CD8-positive, alpha-beta T cell (primary cell): ENCODE measurements at regions of chr2 and their contacts with region 1.

Region 1: GRCh38 chr2:75416420-75417342 is 144.1 kb downstream of the EVA1A start:
- DNase-seq: peak in 5 of 9 experiments; percentile 10 to 69 (median 50)
- ATAC-seq: peak; percentile 95
- H3K4me3 ChIP-seq: peak overlapping the region; percentile 39 to 48
- H3K4me3 Mint-ChIP-seq: peak overlapping the region; percentile 91
- H3K27ac ChIP-seq: peak overlapping the region; percentile 43 to 60
- H3K27ac Mint-ChIP-seq: peak overlapping the region; percentile 95
- H3K4me1 ChIP-seq: peaks cover 17% of the 10 kb centered on the region
- H3K4me1 Mint-ChIP-seq: peaks cover 50% of the 10 kb centered on the region
- H3K27me3 ChIP-seq: no peaks in the 10 kb centered on the region
- H3K27me3 Mint-ChIP-seq: no peaks in the 10 kb centered on the region
- CTCF ChIP-seq: no peak

Region 2: DNA sequence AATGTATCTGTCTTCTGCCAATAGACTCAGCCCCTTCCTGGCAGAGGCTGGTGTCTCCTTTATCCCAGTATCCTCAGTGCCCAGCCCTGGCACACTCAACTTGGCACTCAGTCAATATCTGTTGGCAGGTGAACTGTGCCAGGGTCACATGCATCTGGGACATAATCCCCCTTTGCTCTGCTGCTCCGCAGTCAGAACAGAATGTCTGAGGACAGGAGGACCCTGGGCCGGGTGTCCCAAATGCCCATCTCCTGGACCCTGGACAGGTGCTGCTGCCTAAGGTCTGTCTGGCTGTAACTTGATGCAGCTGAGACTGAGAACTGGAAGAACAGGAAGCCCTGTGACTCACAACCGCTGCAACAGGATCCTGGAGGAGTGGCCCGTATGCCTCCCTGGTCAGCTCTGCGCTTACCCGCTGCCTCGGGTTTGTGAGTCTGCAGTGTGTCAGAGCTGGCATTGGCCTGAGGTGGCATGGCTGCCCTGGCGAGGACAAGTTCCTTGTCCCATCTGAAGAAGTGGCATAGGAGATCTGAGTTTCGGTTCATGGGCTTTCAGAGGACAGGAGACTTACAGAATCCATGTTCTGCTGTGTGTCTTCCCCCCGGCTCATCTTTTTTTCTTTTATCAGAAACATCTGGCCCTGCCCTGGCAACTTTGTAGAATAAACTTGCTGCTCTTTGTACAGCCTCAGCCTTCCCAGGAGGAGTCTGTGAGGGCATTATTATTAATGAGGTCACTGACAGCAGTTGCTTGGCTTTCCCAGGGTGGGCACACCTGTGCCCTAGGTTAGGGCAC is 571.3 kb before region 1 on chr2:
- CTCF ChIA-PET with region 1: no interaction called
- POLR2A ChIA-PET with region 1: no interaction called
- intact Hi-C with region 1: loop called in 1 of 2 experiments (anchors 10 kb)
- DNase-seq: peak in 5 of 9 experiments; percentile 15 to 43 (median 23)
- ATAC-seq: no peak
- H3K4me3 ChIP-seq: no peak overlapping the region
- H3K4me3 Mint-ChIP-seq: peak overlapping the region; percentile 37
- H3K27ac ChIP-seq: no peak overlapping the region
- H3K27ac Mint-ChIP-seq: no peak overlapping the region
- H3K4me1 ChIP-seq: peaks cover 97% of the 10 kb centered on the region
- H3K4me1 Mint-ChIP-seq: peaks cover 90% of the 10 kb centered on the region
- H3K27me3 ChIP-seq: no peaks in the 10 kb centered on the region
- H3K27me3 Mint-ChIP-seq: no peaks in the 10 kb centered on the region
- CTCF ChIP-seq: no peak

Region 3: DNA sequence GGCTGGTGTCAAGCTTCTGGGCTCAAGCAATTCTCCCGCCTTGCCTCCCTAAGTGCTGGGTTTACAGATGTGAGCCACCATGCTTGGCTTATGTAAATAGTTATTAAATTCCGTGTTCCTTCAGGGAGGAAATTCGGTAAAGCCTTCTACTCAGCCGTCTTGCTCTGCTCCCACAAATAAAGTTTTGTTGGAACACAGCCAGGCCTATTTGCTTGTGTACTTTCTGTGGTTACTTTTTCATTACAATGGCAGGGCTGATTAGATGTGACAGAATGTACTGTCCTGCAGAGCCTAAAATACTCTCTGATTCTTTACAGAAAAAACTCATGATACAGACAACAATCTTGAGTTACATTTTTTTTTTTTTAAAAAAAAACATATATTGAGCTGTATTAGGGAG is 148.6 kb before region 1 on chr2:
- CTCF ChIA-PET with region 1: no interaction called
- POLR2A ChIA-PET with region 1: no interaction called
- intact Hi-C with region 1: no loop called
- DNase-seq: no peak
- ATAC-seq: no peak
- H3K4me3 ChIP-seq: no peak overlapping the region
- H3K4me3 Mint-ChIP-seq: no peak overlapping the region
- H3K27ac ChIP-seq: no peak overlapping the region
- H3K27ac Mint-ChIP-seq: no peak overlapping the region
- H3K4me1 ChIP-seq: no peaks in the 10 kb centered on the region
- H3K4me1 Mint-ChIP-seq: no peaks in the 10 kb centered on the region
- H3K27me3 ChIP-seq: no peaks in the 10 kb centered on the region
- H3K27me3 Mint-ChIP-seq: no peaks in the 10 kb centered on the region
- CTCF ChIP-seq: no peak